Dorsolateral prefrontal cortex (tissue), 120 donors: ENCODE measurements at regions of chr12 and their contacts with region 1.

Region 1: DNA sequence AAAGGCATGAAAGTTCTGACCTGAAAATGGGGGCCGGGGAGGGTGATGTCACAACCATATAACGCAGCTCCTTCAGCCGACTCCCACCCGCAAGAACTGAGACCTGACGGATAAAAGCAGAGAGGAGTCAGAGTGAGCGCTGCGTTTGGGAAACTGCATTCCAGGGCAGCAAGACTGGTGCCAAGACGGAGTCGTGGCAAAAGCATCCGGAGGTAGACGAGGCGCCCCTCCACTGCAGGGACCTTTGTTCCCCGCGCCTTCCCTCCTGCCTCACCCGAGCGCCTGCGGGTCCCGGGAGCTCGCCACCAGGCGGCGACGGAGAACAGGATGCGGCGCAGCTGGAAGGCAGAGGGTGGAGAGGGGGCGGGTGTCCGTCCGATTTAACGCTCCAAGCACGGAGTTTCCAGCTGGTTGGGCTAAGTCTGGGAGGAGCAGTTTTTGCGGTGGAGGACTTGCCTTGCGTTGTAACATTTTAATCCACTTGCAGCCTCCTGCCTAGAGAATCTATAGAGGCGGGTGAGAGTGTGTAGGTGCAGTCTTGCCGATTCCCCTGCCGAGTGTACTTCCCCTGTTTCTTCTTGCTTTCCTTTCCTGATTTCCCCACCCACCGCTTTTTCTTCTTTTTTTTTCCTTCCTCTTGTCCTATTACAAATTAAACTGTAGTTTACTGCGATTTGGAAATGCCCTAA is 1.2 kb upstream of the CPNE8 start:
- DNase-seq: peak; percentile 26 to 86 (median 78)
- H3K4me3 ChIP-seq: peak overlapping the region; percentile 37 to 81 (median 72)
- H3K27ac ChIP-seq: peak overlapping the region in 56 of 59 donors; percentile 9 to 97 (median 86)
- H3K27me3 ChIP-seq: no peaks in the 10 kb centered on the region
- CTCF ChIP-seq: peak; percentile 50 to 90 (median 82)

Region 2: DNA sequence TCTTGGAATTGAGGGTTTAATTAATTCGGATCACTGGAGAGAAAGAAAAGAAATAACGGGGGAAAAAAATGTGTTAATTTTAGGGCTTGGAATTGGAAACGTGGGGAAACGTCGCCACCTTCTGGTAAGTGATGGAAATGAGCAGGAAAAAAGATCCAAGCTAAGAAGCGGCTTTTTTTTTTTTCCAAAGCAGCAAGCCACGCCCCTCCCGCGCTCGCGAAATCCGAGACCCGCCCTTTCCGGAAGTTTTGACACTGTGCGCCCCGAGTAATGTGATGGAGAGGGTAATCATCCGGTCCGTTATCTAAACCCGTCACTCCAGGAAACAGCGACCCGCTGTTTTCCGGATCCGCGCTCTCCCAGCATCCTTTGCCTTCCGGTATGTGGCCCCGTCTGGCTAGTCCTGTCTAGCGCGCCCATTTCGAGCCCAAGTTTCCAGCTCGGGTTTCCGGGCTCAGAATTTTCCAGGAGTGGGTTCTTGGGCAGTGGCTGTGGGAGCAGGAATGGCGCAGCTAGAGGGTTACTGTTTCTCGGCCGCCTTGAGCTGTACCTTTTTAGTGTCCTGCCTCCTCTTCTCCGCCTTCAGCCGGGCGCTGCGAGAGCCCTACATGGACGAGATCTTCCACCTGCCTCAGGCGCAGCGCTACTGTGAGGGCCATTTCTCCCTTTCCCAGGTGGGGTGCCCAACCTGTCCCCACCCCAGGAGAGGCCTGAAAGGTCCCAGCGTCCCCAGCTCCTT is 590.1 kb before region 1 on chr12 and contains the start of gene ALG10B:
- intact Hi-C with region 1: loop called in 1 of 2 experiments (anchors 2 kb)
- DNase-seq: peak; percentile 86 to 96 (median 94)
- H3K4me3 ChIP-seq: peak within 1 kb of the TSS; percentile 49 to 93 (median 78)
- H3K27ac ChIP-seq: peak within 1 kb of the TSS in 57 of 59 donors; percentile 40 to 95 (median 84)
- H3K27me3 ChIP-seq: no peaks in the 10 kb centered on the region
- CTCF ChIP-seq: peak; percentile 70 to 96 (median 86)
- total RNA-seq, gene ALG10B: 4.5 to 15.5 (median 10.1) TPM

Region 3: DNA sequence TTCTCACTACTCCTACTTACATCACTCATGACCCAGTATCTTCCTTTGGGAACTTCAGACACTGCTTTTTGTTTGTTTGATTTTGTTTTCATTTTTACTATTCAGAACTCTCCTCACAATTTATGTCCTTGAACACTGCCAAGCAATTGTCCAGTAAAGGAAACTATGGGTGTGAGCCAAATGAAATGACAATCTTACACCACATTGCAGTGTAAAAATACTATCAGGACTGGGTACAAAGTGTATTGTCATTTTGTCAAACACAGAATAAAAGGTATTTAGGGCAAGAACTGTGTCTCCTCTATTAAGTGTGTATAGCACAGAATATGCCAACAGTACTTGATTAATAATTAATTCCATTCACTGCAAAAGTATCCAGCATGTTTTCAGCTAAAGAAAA is 390.7 kb before region 1 on chr12:
- intact Hi-C with region 1: no loop called
- DNase-seq: no peak
- H3K4me3 ChIP-seq: peak overlapping the region in 2 of 59 donors; percentile 1 to 8
- H3K27ac ChIP-seq: peak overlapping the region in 5 of 59 donors; percentile 14 to 36 (median 18)
- H3K27me3 ChIP-seq: no peaks in the 10 kb centered on the region
- CTCF ChIP-seq: no peak

Region 4: GRCh38 chr12:38689704-38690103 is 216.9 kb before region 1 on chr12:
- intact Hi-C with region 1: loop called in 1 of 2 experiments (anchors 5 kb)
- DNase-seq: no peak
- H3K4me3 ChIP-seq: no peak overlapping the region
- H3K27ac ChIP-seq: no peak overlapping the region
- H3K27me3 ChIP-seq: no peaks in the 10 kb centered on the region
- CTCF ChIP-seq: no peak

Region 5: GRCh38 chr12:39103552-39104165 is 197.0 kb after region 1 on chr12:
- intact Hi-C with region 1: loop called (anchors 5 kb)
- DNase-seq: no peak
- H3K4me3 ChIP-seq: peak overlapping the region in 37 of 59 donors; percentile 2 to 52 (median 20)
- H3K27ac ChIP-seq: no peak overlapping the region
- H3K27me3 ChIP-seq: no peaks in the 10 kb centered on the region
- CTCF ChIP-seq: peak; percentile 69 to 90 (median 82)